T-cell (primary cell): ENCODE measurements at regions of chr6 and their contacts with region 1.

Region 1: DNA sequence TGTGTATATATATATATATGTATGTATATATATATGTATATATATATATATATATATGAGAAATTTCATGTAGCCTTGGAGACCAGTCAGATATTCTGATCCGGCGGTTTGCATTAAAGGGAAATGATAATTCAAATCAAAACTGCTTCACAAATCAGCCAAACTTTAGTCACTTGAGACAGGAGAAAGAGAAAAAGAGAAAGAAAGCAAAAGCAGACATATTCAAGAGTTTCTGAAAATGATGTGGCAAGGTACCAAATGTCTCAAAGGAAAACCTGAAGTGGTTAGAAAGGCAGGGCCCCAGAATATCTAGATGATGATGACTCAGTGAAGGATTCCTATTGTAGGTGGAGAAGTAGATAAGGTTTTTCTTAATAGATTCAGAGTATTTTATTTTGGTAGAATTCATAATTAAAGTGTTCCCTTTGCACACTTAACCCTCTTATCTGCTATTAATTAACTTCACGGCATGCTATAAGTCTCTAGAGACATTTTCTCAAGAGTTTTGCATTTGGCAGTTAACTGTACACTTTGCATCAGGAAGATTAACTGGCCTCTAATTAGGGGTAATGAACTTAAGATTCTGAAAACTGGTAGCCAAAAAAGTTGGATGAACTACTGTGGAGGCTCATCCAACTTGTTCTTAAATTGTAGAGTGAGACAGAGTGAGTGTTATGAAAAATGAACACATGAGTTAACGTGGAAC is 50.1 kb upstream of the ASF1A start:
- DNase-seq: no peak
- ATAC-seq: no peak
- H3K4me3 ChIP-seq: no peak overlapping the region
- H3K4me3 Mint-ChIP-seq: no peak overlapping the region
- H3K27ac ChIP-seq: no peak overlapping the region
- H3K27ac Mint-ChIP-seq: no peak overlapping the region
- H3K4me1 ChIP-seq: no peaks in the 10 kb centered on the region
- H3K4me1 Mint-ChIP-seq: peaks cover 15 to 40% (median 27%) of the 10 kb centered on the region in 3 donors
- H3K27me3 ChIP-seq: no peaks in the 10 kb centered on the region
- H3K27me3 Mint-ChIP-seq: no peaks in the 10 kb centered on the region

Region 2: GRCh38 chr6:118551063-118552053 is 292.5 kb before region 1 on chr6:
- CTCF ChIA-PET with region 1: no interaction called
- POLR2A ChIA-PET with region 1: no interaction called
- DNase-seq: peak in 5 of 35 experiments; percentile 7 to 69 (median 10)
- ATAC-seq: peak; percentile 75 to 91 (median 86)
- H3K4me3 ChIP-seq: no peak overlapping the region
- H3K4me3 Mint-ChIP-seq: no peak overlapping the region
- H3K27ac ChIP-seq: no peak overlapping the region
- H3K27ac Mint-ChIP-seq: peak overlapping the region; percentile 59 to 78
- H3K4me1 ChIP-seq: peaks cover 0 to 34% of the 10 kb centered on the region in 2 experiments
- H3K4me1 Mint-ChIP-seq: peaks cover 56 to 62% (median 58%) of the 10 kb centered on the region in 3 donors
- H3K27me3 ChIP-seq: no peaks in the 10 kb centered on the region
- H3K27me3 Mint-ChIP-seq: no peaks in the 10 kb centered on the region

Region 3: GRCh38 chr6:118748311-118749062 is 95.4 kb before region 1 on chr6:
- CTCF ChIA-PET with region 1: no interaction called
- POLR2A ChIA-PET with region 1: no interaction called
- DNase-seq: no peak
- ATAC-seq: no peak
- H3K4me3 ChIP-seq: no peak overlapping the region
- H3K4me3 Mint-ChIP-seq: no peak overlapping the region
- H3K27ac ChIP-seq: no peak overlapping the region
- H3K27ac Mint-ChIP-seq: peak overlapping the region in 1 of 2 donors; percentile 49
- H3K4me1 ChIP-seq: peaks cover 6 to 9% of the 10 kb centered on the region in 2 experiments
- H3K4me1 Mint-ChIP-seq: peaks cover 16 to 30% (median 22%) of the 10 kb centered on the region in 3 donors
- H3K27me3 ChIP-seq: no peaks in the 10 kb centered on the region
- H3K27me3 Mint-ChIP-seq: no peaks in the 10 kb centered on the region

Region 4: GRCh38 chr6:118881440-118882313 is 37.8 kb after region 1 on chr6:
- CTCF ChIA-PET with region 1: interaction called in 1 of 2 experiments, 3 read pairs
- POLR2A ChIA-PET with region 1: interaction called in 1 of 2 experiments, 11 read pairs
- DNase-seq: no peak
- ATAC-seq: peak in 2 of 4 experiments; percentile 41 to 42
- H3K4me3 ChIP-seq: no peak overlapping the region
- H3K4me3 Mint-ChIP-seq: peak overlapping the region; percentile 31 to 49 (median 34)
- H3K27ac ChIP-seq: no peak overlapping the region
- H3K27ac Mint-ChIP-seq: peak overlapping the region; percentile 42 to 66
- H3K4me1 ChIP-seq: peaks cover 3 to 7% of the 10 kb centered on the region in 2 experiments
- H3K4me1 Mint-ChIP-seq: peaks cover 78 to 85% (median 79%) of the 10 kb centered on the region in 3 donors
- H3K27me3 ChIP-seq: no peaks in the 10 kb centered on the region
- H3K27me3 Mint-ChIP-seq: no peaks in the 10 kb centered on the region